Activated B cell treated with CpG ODN at 0.5 μM for 24 hours (primary cell): ENCODE measurements at regions of chr2 and their contacts with region 1.

Region 1: DNA sequence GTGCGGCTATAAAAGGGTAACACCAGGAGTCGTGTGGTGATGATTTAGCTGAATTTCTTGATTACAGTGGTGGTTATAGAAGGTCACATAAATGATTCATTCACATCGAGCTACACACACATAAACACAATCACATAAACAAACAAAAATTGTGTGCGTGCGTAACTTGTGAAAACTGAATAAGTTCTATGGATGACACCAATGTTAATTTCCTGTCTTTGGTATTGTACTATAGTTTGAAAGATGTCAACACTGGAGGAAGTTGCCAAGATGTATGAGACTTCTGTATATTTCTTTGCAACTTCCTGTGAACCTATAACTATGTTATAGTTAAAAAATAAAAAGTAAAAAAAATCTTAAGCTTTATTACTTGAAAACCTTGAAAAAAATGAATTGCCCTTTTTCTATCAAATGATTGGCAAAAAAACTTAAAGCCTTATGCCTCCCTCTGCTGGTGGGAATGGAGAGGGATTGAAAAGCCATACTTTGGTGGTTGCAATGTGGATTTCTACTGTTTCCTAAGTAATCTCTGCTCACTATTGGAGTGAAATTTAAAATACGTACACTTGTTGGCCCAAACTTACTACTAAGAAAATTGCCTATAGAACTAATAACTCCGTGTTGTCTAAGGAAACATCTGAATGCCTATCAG is 227.7 kb downstream of the RPIA start:
- DNase-seq: no peak
- ATAC-seq: no peak
- H3K4me3 Mint-ChIP-seq: no peak overlapping the region
- H3K27ac Mint-ChIP-seq: no peak overlapping the region
- H3K4me1 Mint-ChIP-seq: peaks cover 8% of the 10 kb centered on the region
- H3K27me3 Mint-ChIP-seq: no peaks in the 10 kb centered on the region
- CTCF ChIP-seq: no peak

Region 2: DNA sequence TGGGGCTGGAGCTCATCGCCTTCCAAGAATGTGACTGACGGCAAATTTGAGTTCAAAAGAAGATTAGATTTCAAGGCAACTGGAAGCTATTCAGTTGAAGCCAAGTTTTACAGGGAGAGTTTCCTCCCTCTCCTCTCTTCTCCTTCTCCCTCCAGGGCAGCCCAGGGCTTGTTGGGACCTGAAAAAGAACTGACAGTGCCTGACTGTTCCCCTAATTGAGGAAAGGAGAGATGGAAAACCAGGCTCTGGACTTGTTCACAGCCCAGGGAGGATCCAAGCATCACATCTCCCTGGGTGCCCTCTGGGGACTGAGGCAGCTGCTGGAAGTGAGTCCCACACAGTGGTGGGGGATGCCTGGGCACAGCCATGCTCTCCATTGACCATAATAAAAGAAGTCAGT is 661.0 kb before region 1 on chr2:
- CTCF ChIA-PET with region 1: no interaction called
- POLR2A ChIA-PET with region 1: no interaction called
- intact Hi-C with region 1: no loop called
- DNase-seq: no peak
- ATAC-seq: no peak
- H3K4me3 Mint-ChIP-seq: no peak overlapping the region
- H3K27ac Mint-ChIP-seq: no peak overlapping the region
- H3K4me1 Mint-ChIP-seq: no peaks in the 10 kb centered on the region
- H3K27me3 Mint-ChIP-seq: peaks cover 7% of the 10 kb centered on the region
- CTCF ChIP-seq: no peak

Region 3: GRCh38 chr2:88874063-88874657 is 45.1 kb before region 1 on chr2:
- CTCF ChIA-PET with region 1: interaction called, 4 read pairs
- POLR2A ChIA-PET with region 1: no interaction called
- intact Hi-C with region 1: loop called (anchors 1 kb)
- DNase-seq: no peak
- ATAC-seq: peak; percentile 75
- H3K4me3 Mint-ChIP-seq: no peak overlapping the region
- H3K27ac Mint-ChIP-seq: no peak overlapping the region
- H3K4me1 Mint-ChIP-seq: peaks cover 41% of the 10 kb centered on the region
- H3K27me3 Mint-ChIP-seq: no peaks in the 10 kb centered on the region
- CTCF ChIP-seq: no peak

Region 4: DNA sequence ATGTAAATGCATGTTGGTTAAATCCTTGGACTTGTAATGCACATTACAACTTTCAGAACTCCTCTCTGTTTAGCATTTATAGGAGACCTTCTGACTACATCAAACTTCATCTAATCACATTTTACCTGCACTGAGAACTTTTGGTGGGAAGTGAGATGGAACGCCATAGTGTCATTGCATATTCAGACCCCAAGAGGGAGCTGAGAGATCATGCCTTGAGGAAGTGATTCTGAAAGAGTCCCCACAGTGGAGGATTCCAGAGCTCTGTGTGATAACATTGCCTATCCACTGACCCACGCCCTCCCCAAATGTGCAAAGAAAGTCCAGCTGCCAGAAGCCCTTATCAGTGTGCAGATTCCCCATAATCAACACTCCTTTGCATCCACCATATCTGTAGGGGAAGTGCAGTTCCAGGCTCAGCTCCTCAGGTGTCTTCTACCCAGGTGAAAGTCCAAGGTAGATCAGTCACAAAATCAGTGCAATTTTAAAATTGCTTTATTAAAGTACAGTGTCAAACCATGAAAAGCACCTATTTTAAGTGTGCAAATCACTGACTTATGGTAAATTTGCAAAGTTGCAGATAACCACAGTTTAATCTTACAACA is 15.4 kb before region 1 on chr2:
- CTCF ChIA-PET with region 1: interaction called, 7 read pairs
- POLR2A ChIA-PET with region 1: no interaction called
- intact Hi-C with region 1: loop called (anchors 2 kb)
- DNase-seq: no peak
- ATAC-seq: peak; percentile 81
- H3K4me3 Mint-ChIP-seq: no peak overlapping the region
- H3K27ac Mint-ChIP-seq: no peak overlapping the region
- H3K4me1 Mint-ChIP-seq: peaks cover 4% of the 10 kb centered on the region
- H3K27me3 Mint-ChIP-seq: no peaks in the 10 kb centered on the region
- CTCF ChIP-seq: no peak